Transverse colon (tissue), 4 donors: ENCODE measurements at regions of chr1 and their contacts with region 1.

Region 1: GRCh38 chr1:172826096-172826743 is 167.3 kb downstream of the FASLG start:
- DNase-seq: no peak
- H3K4me3 ChIP-seq: peak overlapping the region in 1 of 4 donors; percentile 21
- H3K27ac ChIP-seq: peak overlapping the region; percentile 63 to 78 (median 72)
- H3K4me1 ChIP-seq: peaks cover 0 to 42% (median 6%) of the 10 kb centered on the region in 4 donors
- H3K27me3 ChIP-seq: no peaks in the 10 kb centered on the region
- CTCF ChIP-seq: peak; percentile 51 to 72 (median 63)
- EP300 ChIP-seq: no peak
- POLR2A ChIP-seq: no peak

Region 2: GRCh38 chr1:172699111-172699510 is 127.1 kb before region 1 on chr1:
- in situ Hi-C with region 1: no loop called
- intact Hi-C with region 1: no loop called
- DNase-seq: peak; percentile 32
- H3K4me3 ChIP-seq: no peak overlapping the region
- H3K27ac ChIP-seq: peak overlapping the region in 3 of 4 donors; percentile 38 to 54 (median 43)
- H3K4me1 ChIP-seq: peaks cover 0 to 9% (median 0%) of the 10 kb centered on the region in 4 donors
- H3K27me3 ChIP-seq: no peaks in the 10 kb centered on the region
- CTCF ChIP-seq: no peak
- EP300 ChIP-seq: no peak
- POLR2A ChIP-seq: no peak

Region 3: GRCh38 chr1:172885971-172886370 is 59.8 kb after region 1 on chr1:
- in situ Hi-C with region 1: no loop called
- intact Hi-C with region 1: loop called (anchors 2 kb)
- DNase-seq: no peak
- H3K4me3 ChIP-seq: no peak overlapping the region
- H3K27ac ChIP-seq: no peak overlapping the region
- H3K4me1 ChIP-seq: no peaks in the 10 kb centered on the region
- H3K27me3 ChIP-seq: no peaks in the 10 kb centered on the region
- CTCF ChIP-seq: no peak
- EP300 ChIP-seq: no peak
- POLR2A ChIP-seq: no peak

Region 4: GRCh38 chr1:173202430-173203145 is 376.4 kb after region 1 on chr1:
- in situ Hi-C with region 1: loop called in 3 of 4 experiments (anchors 5 to 10 kb)
- intact Hi-C with region 1: loop called (anchors 10 kb)
- DNase-seq: peak; percentile 16
- H3K4me3 ChIP-seq: no peak overlapping the region
- H3K27ac ChIP-seq: no peak overlapping the region
- H3K4me1 ChIP-seq: peaks cover 0 to 27% (median 7%) of the 10 kb centered on the region in 4 donors
- H3K27me3 ChIP-seq: no peaks in the 10 kb centered on the region
- CTCF ChIP-seq: peak; percentile 54 to 75 (median 63)
- EP300 ChIP-seq: no peak
- POLR2A ChIP-seq: no peak